ENCODE measurements at regions of chr11 and their contacts with region 1.

Region 1: DNA sequence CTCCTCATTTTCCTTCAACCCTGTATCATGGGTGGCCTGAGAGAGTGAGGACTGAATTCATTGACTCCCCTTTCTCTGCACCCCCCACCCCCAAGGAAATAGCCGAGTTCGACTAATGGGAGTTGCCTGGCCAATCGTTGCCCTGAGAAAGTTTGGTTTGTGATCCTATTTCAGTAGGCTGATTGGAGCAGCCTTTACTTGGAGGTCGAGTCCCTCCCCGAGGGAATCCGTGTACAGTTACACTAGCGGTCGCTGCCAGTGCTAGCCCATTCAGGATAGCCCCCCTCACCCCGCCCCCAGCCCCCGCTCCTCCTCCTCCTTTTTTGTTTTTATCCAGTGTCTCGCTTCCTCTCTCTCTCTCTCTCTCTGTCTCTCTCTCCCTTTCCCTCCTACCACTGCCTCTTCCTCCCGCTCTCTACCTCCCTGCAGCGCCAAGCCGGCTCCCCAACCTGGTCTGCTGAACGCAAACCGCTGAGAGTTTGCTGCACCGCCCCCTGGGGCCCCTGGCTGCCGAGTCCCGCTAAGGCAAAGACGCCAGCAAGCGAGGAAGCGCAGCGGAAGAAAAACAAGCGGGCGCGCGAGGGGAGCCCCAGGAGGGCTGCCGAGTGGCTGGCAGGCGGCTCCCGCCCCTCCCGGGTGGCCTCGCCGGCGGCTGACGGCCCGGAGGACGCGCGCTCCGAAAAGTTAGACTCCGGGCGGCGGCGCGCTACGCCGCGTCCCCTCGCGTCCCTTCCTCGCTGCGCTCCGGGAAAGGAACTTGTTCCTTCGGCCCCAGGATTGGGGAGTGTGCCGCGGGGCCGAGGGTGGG is at the start of gene GRAMD1B:
- DNase-seq: peak; percentile 78
- CTCF ChIP-seq: peak; percentile 22

Region 2: DNA sequence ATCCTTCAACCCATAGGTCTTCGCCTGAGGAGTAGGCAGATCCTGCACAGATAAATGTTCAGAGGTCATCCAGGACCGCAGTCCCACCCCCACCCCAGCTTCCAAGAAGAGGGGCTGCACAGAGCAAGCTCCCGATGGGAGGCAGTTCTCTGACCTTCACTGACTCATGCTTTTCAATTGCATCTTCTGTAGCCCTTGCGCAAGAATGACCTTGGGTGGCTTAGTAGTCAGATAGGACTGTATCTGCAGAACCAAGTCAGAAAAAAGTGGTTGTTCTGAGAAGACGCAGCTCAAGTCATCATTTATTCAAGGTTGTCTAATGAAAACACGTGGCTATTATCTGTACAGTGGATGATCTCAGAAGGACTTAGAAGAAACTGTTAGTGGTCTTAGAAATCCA is 16.5 kb before region 1 on chr11:
- CTCF ChIA-PET with region 1: interaction called, 51 read pairs
- POLR2A ChIA-PET with region 1: no interaction called
- DNase-seq: no peak
- CTCF ChIP-seq: no peak